T-cell (primary cell): ENCODE measurements at regions of chr20 and their contacts with region 1.

Region 1: DNA sequence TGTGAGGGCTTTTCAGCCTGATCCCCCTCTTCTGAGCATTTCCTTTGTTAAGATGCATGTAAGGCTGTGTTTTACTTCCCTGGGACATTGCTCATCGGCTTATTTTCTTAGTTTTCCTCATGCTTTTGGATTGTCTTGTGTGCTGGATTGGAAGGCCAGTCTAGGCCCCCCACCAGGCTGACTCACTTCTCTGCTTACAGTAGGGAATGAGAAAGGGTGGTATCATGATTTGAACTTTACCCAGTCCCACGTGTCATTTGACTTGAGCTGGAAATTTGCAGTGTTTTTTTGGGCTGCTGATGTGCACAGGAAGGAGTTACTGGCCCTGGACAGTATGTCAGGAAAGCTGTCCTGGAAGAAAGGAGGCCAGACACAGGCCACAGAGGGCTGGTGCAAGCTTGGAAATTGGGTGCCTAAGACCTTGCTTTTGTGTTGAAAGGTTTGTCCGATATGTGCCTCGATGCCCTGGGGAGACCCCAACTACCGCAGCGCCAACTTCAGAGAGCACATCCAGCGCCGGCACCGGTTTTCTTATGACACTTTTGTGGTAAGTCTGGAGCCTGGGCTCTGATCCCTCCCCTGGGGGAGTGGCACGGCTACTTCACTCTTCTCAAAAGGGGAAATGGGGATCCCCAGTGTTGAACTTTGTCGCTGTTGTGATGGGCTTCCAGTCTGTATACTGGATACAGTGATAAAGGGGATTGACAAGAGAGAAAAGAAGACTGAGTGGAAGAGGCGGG is 12.8 kb downstream of the RNF114 start:
- DNase-seq: no peak
- ATAC-seq: no peak
- H3K4me3 ChIP-seq: no peak overlapping the region
- H3K4me3 Mint-ChIP-seq: no peak overlapping the region
- H3K27ac ChIP-seq: no peak overlapping the region
- H3K27ac Mint-ChIP-seq: no peak overlapping the region
- H3K4me1 ChIP-seq: no peaks in the 10 kb centered on the region
- H3K4me1 Mint-ChIP-seq: peaks cover 6 to 13% (median 7%) of the 10 kb centered on the region in 3 donors
- H3K27me3 ChIP-seq: no peaks in the 10 kb centered on the region
- H3K27me3 Mint-ChIP-seq: no peaks in the 10 kb centered on the region

Region 2: GRCh38 chr20:49323622-49324238 is 625.2 kb before region 1 on chr20:
- CTCF ChIA-PET with region 1: no interaction called
- POLR2A ChIA-PET with region 1: no interaction called
- DNase-seq: peak in 14 of 35 experiments; percentile 1 to 67 (median 14)
- ATAC-seq: peak; percentile 75 to 88 (median 86)
- H3K4me3 ChIP-seq: no peak overlapping the region
- H3K4me3 Mint-ChIP-seq: no peak overlapping the region
- H3K27ac ChIP-seq: no peak overlapping the region
- H3K27ac Mint-ChIP-seq: peak overlapping the region; percentile 58 to 87
- H3K4me1 ChIP-seq: peaks cover 0 to 21% of the 10 kb centered on the region in 2 experiments
- H3K4me1 Mint-ChIP-seq: peaks cover 18 to 25% (median 22%) of the 10 kb centered on the region in 3 donors
- H3K27me3 ChIP-seq: peaks cover 4 to 23% of the 10 kb centered on the region in 2 experiments
- H3K27me3 Mint-ChIP-seq: peaks cover 20 to 28% of the 10 kb centered on the region in 2 donors

Region 3: DNA sequence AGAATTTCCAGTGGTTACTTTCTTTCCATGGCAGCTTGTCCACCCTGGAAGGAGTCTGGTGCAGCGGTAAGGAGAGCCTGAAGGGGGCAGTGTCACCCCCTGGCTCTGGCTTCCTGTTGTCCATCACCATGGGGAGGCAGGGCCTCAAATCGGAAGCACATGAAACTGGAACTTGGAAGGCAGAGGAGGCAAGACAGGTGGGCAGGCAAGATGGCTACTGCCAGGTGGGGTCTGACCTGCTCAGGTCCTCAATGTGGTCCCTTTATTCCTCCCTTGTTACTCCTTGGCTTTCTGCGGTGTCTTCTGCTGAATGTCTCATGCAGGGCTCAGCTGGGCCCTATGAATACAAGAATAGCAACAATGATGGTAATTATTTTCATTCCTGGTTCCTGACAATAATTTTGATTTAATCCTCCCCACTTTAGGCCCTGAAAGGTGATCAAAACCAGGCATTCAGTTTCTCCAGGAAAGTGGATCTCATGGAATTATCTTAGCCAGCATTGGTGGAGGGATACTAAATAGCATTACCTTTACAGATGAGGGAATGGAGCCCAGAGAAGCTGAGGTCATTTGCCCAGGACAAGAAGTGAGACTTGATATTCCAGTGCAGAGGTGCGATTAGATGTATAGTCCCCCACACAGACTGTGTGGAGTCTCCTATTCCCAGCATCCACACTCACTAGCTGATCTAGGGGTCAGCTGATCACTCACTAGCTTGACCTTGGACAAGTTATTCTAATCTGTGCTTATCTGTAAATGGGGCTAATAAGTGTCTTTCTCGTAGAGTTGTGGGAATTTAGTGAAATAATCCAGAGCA is 16.2 kb after region 1 on chr20:
- CTCF ChIA-PET with region 1: no interaction called
- POLR2A ChIA-PET with region 1: no interaction called
- DNase-seq: peak in 2 of 35 experiments; percentile 18 to 21
- ATAC-seq: no peak
- H3K4me3 ChIP-seq: no peak overlapping the region
- H3K4me3 Mint-ChIP-seq: no peak overlapping the region
- H3K27ac ChIP-seq: no peak overlapping the region
- H3K27ac Mint-ChIP-seq: no peak overlapping the region
- H3K4me1 ChIP-seq: no peaks in the 10 kb centered on the region
- H3K4me1 Mint-ChIP-seq: no peaks in the 10 kb centered on the region
- H3K27me3 ChIP-seq: no peaks in the 10 kb centered on the region
- H3K27me3 Mint-ChIP-seq: no peaks in the 10 kb centered on the region

Region 4: GRCh38 chr20:50169329-50169831 is 220.4 kb after region 1 on chr20:
- CTCF ChIA-PET with region 1: no interaction called
- POLR2A ChIA-PET with region 1: no interaction called
- DNase-seq: peak; percentile 37 to 89 (median 74)
- ATAC-seq: peak; percentile 56 to 78 (median 68)
- H3K4me3 ChIP-seq: no peak overlapping the region
- H3K4me3 Mint-ChIP-seq: no peak overlapping the region
- H3K27ac ChIP-seq: no peak overlapping the region
- H3K27ac Mint-ChIP-seq: no peak overlapping the region
- H3K4me1 ChIP-seq: peaks cover 0 to 19% of the 10 kb centered on the region in 2 experiments
- H3K4me1 Mint-ChIP-seq: peaks cover 14 to 17% (median 14%) of the 10 kb centered on the region in 3 donors
- H3K27me3 ChIP-seq: peaks cover 0 to 44% of the 10 kb centered on the region in 2 experiments
- H3K27me3 Mint-ChIP-seq: peaks cover 15 to 20% of the 10 kb centered on the region in 2 donors

Region 5: DNA sequence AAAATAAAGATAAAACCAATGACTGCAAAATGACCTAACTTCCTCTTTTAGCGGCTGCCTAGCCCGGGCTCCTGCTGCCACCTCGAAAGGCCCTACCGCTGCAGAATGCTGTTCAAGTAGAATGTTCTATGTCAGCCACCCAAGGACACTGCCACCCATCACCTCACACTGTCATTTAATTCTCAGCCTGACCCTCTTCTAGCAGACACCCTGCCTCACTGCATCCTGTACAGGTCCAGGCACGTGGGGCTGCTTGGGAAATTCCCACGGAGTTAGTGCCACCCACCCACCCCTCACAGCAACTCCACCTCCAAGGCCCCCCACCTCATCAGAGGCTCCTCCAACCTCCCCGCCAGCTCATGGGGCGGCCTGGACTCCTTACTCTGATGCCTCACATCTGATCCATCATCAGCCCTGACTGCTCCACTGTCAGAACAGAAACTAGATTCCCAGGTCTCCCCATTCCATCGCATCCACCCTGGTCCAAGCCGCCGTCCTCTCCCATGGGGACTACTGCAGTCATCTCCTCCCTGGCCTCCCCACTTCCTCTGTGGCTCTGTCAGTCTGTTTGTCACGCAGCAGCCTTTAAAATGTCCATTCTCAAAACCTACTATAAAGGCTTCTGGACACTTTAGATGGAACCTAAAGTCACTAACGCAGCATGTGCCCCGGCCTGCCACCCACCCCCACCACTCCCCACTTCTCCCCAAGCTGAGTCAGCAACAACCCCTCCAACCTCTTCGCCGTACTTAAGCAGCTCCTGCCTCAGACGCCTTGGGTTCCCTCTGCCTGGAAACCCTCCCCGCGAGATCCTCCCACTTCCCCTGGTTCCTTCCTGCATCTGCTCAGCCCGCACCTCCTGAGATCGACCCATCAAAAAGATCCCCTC is 1576.5 kb after region 1 on chr20:
- CTCF ChIA-PET with region 1: no interaction called
- POLR2A ChIA-PET with region 1: interaction called in 1 of 2 experiments, 10 read pairs
- DNase-seq: peak in 29 of 35 experiments; percentile 9 to 73 (median 43)
- ATAC-seq: peak; percentile 38 to 61 (median 49)
- H3K4me3 ChIP-seq: peak overlapping the region; percentile 19 to 44
- H3K4me3 Mint-ChIP-seq: peak overlapping the region; percentile 64 to 78 (median 67)
- H3K27ac ChIP-seq: peak overlapping the region; percentile 76
- H3K27ac Mint-ChIP-seq: peak overlapping the region; percentile 82 to 92
- H3K4me1 ChIP-seq: peaks cover 25 to 67% of the 10 kb centered on the region in 2 experiments
- H3K4me1 Mint-ChIP-seq: peaks cover 73 to 82% (median 76%) of the 10 kb centered on the region in 3 donors
- H3K27me3 ChIP-seq: no peaks in the 10 kb centered on the region
- H3K27me3 Mint-ChIP-seq: no peaks in the 10 kb centered on the region